Heart left ventricle (tissue), 16 donors: ENCODE measurements at regions of chr22 and their contacts with region 1.

Region 1: GRCh38 chr22:22884010-22884887 is 3.4 kb upstream of the IGLL5 start:
- DNase-seq: peak in 4 of 5 donors; percentile 34 to 58 (median 54)
- ATAC-seq: peak; percentile 55 to 77 (median 69)
- H3K4me3 ChIP-seq: no peak overlapping the region
- H3K27ac ChIP-seq: no peak overlapping the region
- H3K4me1 ChIP-seq: no peaks in the 10 kb centered on the region
- H3K27me3 ChIP-seq: peaks cover 0 to 16% (median 0%) of the 10 kb centered on the region in 9 donors
- CTCF ChIP-seq: peak; percentile 33 to 79 (median 61)
- POLR2A ChIP-seq: no peak

Region 2: DNA sequence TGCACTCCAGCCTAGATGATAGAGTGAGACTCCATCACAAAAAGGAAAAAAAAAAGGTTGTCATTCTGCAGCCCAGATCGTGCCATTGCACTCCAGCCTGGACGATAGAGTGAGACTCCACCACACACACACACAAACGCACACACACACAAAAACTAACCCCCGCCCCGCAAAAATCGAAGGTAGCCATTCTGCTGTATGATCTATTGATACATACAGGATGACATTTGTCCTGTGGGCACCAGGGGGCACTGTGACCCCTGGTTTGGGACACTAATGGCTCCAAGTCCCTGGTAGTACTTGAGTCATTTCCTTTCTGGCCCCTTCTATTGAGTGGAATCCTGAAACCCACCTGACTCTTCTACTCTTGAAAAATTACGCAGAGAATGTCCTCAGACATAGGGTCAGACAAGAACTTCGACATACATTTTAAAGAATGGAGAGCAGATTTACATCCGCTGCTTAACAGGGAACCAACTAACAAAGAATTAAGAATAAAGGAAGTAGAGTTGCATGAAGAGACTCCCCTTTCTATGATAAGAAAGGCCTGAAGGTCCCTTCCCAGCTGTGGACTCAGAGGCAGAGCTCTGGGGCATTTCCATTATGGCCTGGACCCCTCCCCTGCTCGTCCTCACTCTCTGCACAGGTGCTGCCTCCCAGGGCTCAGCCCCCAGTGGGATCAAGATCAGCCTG is 290.1 kb before region 1 on chr22:
- intact Hi-C with region 1: loop called in 1 of 10 experiments (anchors 10 kb)
- DNase-seq: peak in 2 of 5 donors; percentile 13 to 69
- ATAC-seq: peak in 1 of 4 donors; percentile 45
- H3K4me3 ChIP-seq: no peak overlapping the region
- H3K27ac ChIP-seq: no peak overlapping the region
- H3K4me1 ChIP-seq: no peaks in the 10 kb centered on the region
- H3K27me3 ChIP-seq: peaks cover 0 to 3% (median 0%) of the 10 kb centered on the region in 9 donors
- CTCF ChIP-seq: peak; percentile 36 to 63 (median 53)
- POLR2A ChIP-seq: no peak

Region 3: DNA sequence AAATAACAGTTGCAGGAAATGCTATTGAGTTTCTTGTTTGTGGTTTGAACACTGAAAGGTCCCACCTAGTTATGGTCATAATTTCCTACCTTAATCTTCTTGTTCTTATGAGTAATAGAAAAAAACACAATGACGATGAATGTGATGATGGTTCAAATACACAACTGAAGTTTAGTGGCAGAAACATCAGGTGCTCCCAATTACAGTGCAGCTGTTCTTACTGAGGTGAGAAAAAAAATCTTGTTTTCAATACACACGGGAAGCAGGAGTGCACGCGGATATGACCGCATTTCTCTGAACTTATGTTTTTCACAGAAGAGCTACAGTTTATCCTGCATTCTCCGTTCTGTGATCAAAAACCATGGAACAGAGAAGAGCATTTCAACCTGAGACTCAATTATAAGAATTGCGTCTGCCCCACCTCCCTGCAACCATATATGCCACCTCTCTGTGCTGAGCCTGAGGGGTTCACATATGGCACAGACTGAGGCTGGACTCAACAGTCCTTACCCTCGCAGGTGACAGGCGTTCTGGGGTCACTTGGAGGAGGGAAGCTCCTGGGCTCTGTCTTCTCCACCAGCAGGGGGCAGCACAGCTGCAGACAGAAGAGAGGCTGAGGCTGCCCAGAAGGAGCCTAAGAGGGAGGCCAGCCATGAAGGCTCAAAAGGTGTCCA is 96.3 kb before region 1 on chr22:
- intact Hi-C with region 1: loop called in 2 of 10 experiments (anchors 10 kb)
- DNase-seq: peak in 4 of 5 donors; percentile 36 to 76 (median 40)
- ATAC-seq: peak in 3 of 4 donors; percentile 50 to 60 (median 54)
- H3K4me3 ChIP-seq: no peak overlapping the region
- H3K27ac ChIP-seq: peak overlapping the region in 1 of 12 donors; percentile 71
- H3K4me1 ChIP-seq: peaks cover 0 to 8% (median 0%) of the 10 kb centered on the region in 12 donors
- H3K27me3 ChIP-seq: peaks cover 0 to 35% (median 6%) of the 10 kb centered on the region in 9 donors
- CTCF ChIP-seq: peak; percentile 45 to 79 (median 64)
- POLR2A ChIP-seq: no peak

Region 4: DNA sequence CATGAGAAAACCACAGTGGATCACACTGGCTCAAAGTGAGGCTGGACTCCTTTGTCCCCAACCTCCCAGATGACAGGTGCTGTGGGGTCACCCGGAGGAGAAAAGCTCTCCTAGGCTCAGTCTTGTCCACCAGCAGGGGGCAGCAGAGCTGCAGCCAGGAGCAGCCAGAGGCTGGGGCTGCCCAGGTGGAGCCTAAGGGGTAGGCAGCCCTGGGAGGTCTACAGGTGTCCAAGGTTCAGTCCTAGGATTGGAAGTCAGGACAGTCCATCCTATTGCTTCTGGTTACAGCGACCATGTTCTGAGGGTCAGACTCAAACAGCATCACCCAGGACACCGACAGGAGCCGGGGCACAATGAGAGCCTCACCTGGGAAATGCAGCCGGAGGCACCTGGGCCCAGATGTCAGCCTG is 74.2 kb before region 1 on chr22:
- intact Hi-C with region 1: loop called in 4 of 10 experiments (anchors 2 to 10 kb)
- DNase-seq: peak in 3 of 5 donors; percentile 46 to 65 (median 53)
- ATAC-seq: peak in 3 of 4 donors; percentile 45 to 77 (median 47)
- H3K4me3 ChIP-seq: no peak overlapping the region
- H3K27ac ChIP-seq: no peak overlapping the region
- H3K4me1 ChIP-seq: peaks cover 0 to under 1% (median 0%) of the 10 kb centered on the region in 12 donors
- H3K27me3 ChIP-seq: peaks cover 0 to 24% (median 0%) of the 10 kb centered on the region in 9 donors
- CTCF ChIP-seq: peak in 11 of 12 donors; percentile 42 to 82 (median 65)
- POLR2A ChIP-seq: no peak

Region 5: GRCh38 chr22:22942511-22943329 is 58.5 kb after region 1 on chr22:
- intact Hi-C with region 1: loop called in 1 of 10 experiments (anchors 10 kb)
- DNase-seq: peak; percentile 47 to 68 (median 54)
- ATAC-seq: peak in 3 of 4 donors; percentile 51 to 67 (median 54)
- H3K4me3 ChIP-seq: no peak overlapping the region
- H3K27ac ChIP-seq: no peak overlapping the region
- H3K4me1 ChIP-seq: peaks cover 0 to 5% (median 0%) of the 10 kb centered on the region in 12 donors
- H3K27me3 ChIP-seq: peaks cover 0 to 11% (median 0%) of the 10 kb centered on the region in 9 donors
- CTCF ChIP-seq: peak; percentile 52 to 72 (median 62)
- POLR2A ChIP-seq: no peak

Region 6: GRCh38 chr22:23023294-23023693 is 139.0 kb after region 1 on chr22:
- intact Hi-C with region 1: no loop called
- DNase-seq: no peak
- ATAC-seq: no peak
- H3K4me3 ChIP-seq: no peak overlapping the region
- H3K27ac ChIP-seq: no peak overlapping the region
- H3K4me1 ChIP-seq: no peaks in the 10 kb centered on the region
- H3K27me3 ChIP-seq: no peaks in the 10 kb centered on the region
- CTCF ChIP-seq: no peak
- POLR2A ChIP-seq: no peak

Region 7: DNA sequence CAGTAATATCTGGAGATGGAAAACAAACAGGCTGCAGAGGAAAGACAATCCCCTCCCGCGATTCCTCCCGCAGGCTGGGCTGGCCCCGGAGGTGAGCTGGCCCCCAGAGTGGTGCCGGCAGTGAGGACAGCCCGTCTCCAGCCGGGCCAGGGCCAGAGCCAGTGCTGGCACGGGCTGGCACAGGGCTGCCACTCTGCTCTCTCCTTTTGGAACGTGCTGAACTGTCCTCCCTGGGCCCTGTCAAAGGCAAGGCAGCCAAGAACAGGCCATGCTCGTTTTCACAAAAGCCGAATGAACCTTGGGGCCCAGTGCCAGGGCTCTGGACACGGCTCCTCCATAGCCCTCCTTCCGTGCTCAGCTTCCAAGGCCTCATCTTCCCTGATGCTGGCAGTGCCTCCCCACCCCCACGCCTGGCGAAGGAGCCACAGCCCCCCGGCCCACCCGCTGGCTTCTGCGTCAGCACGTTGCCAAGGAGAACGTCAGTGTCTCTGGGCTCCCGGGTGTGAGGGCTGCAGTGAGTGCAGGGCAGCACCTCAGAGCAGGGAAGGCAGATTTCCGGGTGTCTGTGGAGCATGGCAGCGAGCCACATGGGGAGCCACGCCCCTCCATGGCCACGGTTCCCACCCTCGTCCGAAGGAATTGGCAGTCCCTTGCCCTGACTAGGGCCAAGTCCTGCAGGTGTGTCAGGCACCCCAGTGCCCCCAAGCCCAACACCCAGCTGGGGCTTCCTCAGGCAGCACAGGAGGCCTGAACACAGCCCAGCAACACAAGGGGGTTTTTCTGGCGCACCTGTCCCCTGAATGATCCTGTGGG is 214.7 kb after region 1 on chr22:
- intact Hi-C with region 1: no loop called
- DNase-seq: peak in 4 of 5 donors; percentile 25 to 78 (median 68)
- ATAC-seq: peak; percentile 90 to 99 (median 95)
- H3K4me3 ChIP-seq: no peak overlapping the region
- H3K27ac ChIP-seq: peak overlapping the region in 10 of 12 donors; percentile 15 to 84 (median 51)
- H3K4me1 ChIP-seq: peaks cover 0 to 29% (median 18%) of the 10 kb centered on the region in 12 donors
- H3K27me3 ChIP-seq: no peaks in the 10 kb centered on the region
- CTCF ChIP-seq: no peak
- POLR2A ChIP-seq: no peak